Common myeloid progenitor, CD34-positive (primary cell): ENCODE measurements at regions of chr1 and their contacts with region 1.

Region 1: DNA sequence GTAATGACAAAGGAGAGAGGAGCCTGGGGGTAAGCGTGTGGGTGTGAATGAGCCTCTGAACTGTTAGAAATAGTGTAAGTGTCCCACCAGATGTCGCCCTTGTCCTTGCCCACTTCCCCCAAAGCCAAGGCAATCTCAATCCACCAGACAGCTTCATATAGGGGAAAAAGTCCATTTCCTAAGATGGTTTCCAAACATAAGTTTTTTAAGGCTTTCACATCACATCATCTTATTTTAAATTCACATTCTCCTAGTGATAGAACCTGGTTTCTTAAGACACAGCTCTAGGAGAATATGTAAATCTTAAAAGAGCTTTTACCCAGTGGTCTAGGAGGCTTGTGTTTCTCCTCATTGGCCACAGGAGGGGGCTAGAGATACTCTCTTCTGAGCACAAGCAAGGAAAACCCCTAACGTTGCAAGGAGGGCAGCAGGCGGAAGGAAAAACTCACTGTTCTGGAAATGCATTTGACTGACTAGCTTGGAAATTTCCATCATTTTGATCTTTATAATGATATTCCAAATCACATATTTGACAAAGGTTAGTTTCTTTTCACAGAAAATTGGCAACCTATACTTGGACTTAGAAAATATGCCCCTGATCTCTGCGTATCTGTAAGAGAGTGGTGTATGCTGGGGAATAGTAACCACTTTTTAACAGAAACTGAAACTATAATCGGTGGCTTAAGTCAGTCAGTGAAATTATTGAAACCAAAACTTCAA is 51.9 kb upstream of the LPAR3 start:
- DNase-seq: peak; percentile 94 to 98 (median 97)
- H3K4me3 ChIP-seq: peak overlapping the region in 6 of 7 experiments; percentile 56 to 96 (median 72)
- H3K27ac ChIP-seq: peak overlapping the region; percentile 46 to 79
- H3K4me1 ChIP-seq: peaks cover 0 to 12% (median 7%) of the 10 kb centered on the region in 4 experiments
- H3K27me3 ChIP-seq: no peaks in the 10 kb centered on the region

Region 2: GRCh38 chr1:84834419-84835064 is 110.4 kb before region 1 on chr1:
- CTCF ChIA-PET with region 1: no interaction called
- POLR2A ChIA-PET with region 1: no interaction called
- DNase-seq: no peak
- H3K4me3 ChIP-seq: no peak overlapping the region
- H3K27ac ChIP-seq: no peak overlapping the region
- H3K4me1 ChIP-seq: no peaks in the 10 kb centered on the region
- H3K27me3 ChIP-seq: no peaks in the 10 kb centered on the region

Region 3: DNA sequence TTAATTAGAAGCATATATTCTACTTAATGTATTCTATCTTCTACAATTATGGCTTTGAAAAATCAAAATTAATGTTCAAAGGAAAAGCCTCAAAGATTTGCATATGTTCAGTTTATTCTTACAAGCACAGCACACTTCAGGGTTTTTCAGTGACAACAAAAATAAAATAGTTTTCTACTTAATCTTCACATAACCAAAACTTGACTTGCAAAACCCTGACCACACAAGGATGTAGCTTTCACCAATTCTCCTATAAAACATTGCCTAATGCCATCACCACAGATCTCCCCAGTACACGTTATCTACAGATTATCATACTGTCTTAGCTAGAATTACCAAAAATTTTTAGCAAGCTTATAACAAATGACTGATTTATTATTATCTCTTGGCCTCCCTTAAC is 75.2 kb before region 1 on chr1:
- CTCF ChIA-PET with region 1: no interaction called
- POLR2A ChIA-PET with region 1: no interaction called
- DNase-seq: no peak
- H3K4me3 ChIP-seq: no peak overlapping the region
- H3K27ac ChIP-seq: no peak overlapping the region
- H3K4me1 ChIP-seq: no peaks in the 10 kb centered on the region
- H3K27me3 ChIP-seq: peaks cover 0 to 3% (median 0%) of the 10 kb centered on the region in 5 experiments

Region 4: DNA sequence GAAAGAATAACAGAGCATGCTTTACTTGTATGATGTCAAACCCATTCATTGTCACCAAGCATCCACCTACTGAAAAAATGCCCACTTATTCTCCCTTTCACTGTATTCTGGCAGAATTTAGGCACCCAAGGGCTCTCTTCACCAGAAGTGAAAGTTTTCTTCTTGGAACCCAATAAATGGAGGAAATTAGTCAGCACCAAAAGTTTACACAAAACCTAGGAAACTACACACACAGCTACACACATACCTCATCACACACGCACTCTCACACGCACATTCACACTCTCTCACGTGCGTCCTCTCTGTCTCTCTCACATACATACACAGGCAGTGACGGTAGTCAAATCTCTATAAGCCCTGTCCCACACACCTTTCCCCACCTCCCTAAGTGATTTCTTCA is 14.4 kb after region 1 on chr1:
- CTCF ChIA-PET with region 1: interaction called, 19 read pairs
- POLR2A ChIA-PET with region 1: interaction called, 3 read pairs
- DNase-seq: no peak
- H3K4me3 ChIP-seq: no peak overlapping the region
- H3K27ac ChIP-seq: no peak overlapping the region
- H3K4me1 ChIP-seq: no peaks in the 10 kb centered on the region
- H3K27me3 ChIP-seq: no peaks in the 10 kb centered on the region

Region 5: DNA sequence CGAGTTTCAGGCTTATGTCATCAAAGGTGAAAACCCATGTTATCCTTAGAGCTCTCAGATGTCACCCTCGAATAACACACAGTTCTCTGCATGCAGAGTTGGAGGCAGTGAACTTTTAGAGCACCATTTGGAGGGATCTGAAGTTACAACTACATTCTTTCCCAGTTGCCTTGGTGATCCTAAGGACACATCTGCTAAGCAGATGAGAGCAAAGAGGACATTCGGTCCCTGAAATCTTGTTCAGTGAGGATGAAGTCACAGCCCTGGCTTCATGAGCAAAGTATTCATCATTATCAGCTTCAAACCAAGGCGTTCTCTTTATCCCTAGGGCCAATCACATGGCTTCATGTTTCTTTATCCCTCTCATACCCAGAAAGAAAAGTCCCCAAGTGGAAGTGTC is 75.1 kb after region 1 on chr1:
- CTCF ChIA-PET with region 1: interaction called, 124 read pairs
- POLR2A ChIA-PET with region 1: no interaction called
- DNase-seq: no peak
- H3K4me3 ChIP-seq: no peak overlapping the region
- H3K27ac ChIP-seq: no peak overlapping the region
- H3K4me1 ChIP-seq: no peaks in the 10 kb centered on the region
- H3K27me3 ChIP-seq: peaks cover 0 to 2% (median 0%) of the 10 kb centered on the region in 5 experiments

Region 6: GRCh38 chr1:85027242-85027983 is 82.5 kb after region 1 on chr1:
- CTCF ChIA-PET with region 1: interaction called, 124 read pairs
- POLR2A ChIA-PET with region 1: no interaction called
- DNase-seq: peak; percentile 38 to 69 (median 66)
- H3K4me3 ChIP-seq: peak overlapping the region in 1 of 7 experiments; percentile 3
- H3K27ac ChIP-seq: no peak overlapping the region
- H3K4me1 ChIP-seq: no peaks in the 10 kb centered on the region
- H3K27me3 ChIP-seq: peaks cover 0 to 2% (median 0%) of the 10 kb centered on the region in 5 experiments

Region 7: GRCh38 chr1:85033221-85033620 is 88.3 kb after region 1 on chr1:
- CTCF ChIA-PET with region 1: interaction called, 124 read pairs
- POLR2A ChIA-PET with region 1: no interaction called
- DNase-seq: no peak
- H3K4me3 ChIP-seq: no peak overlapping the region
- H3K27ac ChIP-seq: no peak overlapping the region
- H3K4me1 ChIP-seq: no peaks in the 10 kb centered on the region
- H3K27me3 ChIP-seq: peaks cover 0 to 1% (median 0%) of the 10 kb centered on the region in 5 experiments

Region 8: GRCh38 chr1:85230305-85230980 is 285.5 kb after region 1 on chr1:
- CTCF ChIA-PET with region 1: interaction called, 11 read pairs
- POLR2A ChIA-PET with region 1: no interaction called
- DNase-seq: peak; percentile 22 to 37 (median 30)
- H3K4me3 ChIP-seq: no peak overlapping the region
- H3K27ac ChIP-seq: no peak overlapping the region
- H3K4me1 ChIP-seq: peaks cover 0 to 4% (median 0%) of the 10 kb centered on the region in 4 experiments
- H3K27me3 ChIP-seq: no peaks in the 10 kb centered on the region

Region 9: DNA sequence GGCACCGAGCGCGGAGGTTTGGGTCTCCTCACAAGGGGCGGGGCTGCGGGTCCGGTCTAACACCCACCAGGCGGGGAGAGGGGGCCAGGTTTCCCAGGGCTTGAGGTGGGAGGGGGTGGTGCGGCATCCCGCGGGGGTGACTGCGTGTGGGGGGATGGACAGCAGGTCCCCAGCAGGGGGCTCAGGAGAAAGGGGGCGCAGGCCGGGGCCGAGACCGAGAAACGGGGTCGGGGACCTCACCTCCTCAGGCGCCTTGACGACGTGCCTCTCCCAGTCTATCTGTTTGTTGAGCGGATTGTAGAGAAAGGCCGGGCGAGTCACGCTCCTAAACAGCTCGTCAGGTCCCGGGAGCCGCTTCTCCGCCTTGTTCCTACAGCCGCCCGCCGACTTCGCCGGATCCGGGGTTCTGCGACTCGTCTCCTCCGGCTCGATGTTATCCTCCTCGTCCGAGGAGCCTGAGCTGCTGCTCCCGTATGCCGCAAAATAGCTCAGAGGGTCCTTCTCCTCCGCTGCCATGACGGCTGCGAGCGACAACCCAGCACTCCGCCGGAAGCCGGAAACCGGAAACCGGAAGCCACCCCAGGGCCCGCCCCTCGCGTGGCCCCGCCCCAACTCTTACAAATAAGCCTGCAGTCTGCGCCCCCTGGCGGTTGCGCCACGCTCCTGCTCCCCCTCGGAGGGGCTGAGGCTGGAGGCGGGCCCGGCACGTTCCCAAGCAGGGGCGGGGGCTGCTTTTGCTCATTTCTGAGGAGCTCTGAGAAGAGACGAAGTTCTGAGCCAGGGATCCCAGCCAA is 314.4 kb after region 1 on chr1 and contains the start of gene C1orf52:
- CTCF ChIA-PET with region 1: interaction called, 131 read pairs
- POLR2A ChIA-PET with region 1: interaction called, 4 read pairs
- DNase-seq: peak; percentile 93 to 97 (median 96)
- H3K4me3 ChIP-seq: peak within 1 kb of the TSS; percentile 81 to 98 (median 94)
- H3K27ac ChIP-seq: peak within 1 kb of the TSS; percentile 72 to 93
- H3K4me1 ChIP-seq: peaks cover 8 to 18% (median 13%) of the 10 kb centered on the region in 4 experiments
- H3K27me3 ChIP-seq: no peaks in the 10 kb centered on the region